Cardiac septum (tissue), 1 donor: ENCODE measurements at regions of chr15 and their contacts with region 1.

Region 1: GRCh38 chr15:31483053-31483985 is 156.7 kb downstream of the KLF13 start:
- DNase-seq: no peak

Region 2: DNA sequence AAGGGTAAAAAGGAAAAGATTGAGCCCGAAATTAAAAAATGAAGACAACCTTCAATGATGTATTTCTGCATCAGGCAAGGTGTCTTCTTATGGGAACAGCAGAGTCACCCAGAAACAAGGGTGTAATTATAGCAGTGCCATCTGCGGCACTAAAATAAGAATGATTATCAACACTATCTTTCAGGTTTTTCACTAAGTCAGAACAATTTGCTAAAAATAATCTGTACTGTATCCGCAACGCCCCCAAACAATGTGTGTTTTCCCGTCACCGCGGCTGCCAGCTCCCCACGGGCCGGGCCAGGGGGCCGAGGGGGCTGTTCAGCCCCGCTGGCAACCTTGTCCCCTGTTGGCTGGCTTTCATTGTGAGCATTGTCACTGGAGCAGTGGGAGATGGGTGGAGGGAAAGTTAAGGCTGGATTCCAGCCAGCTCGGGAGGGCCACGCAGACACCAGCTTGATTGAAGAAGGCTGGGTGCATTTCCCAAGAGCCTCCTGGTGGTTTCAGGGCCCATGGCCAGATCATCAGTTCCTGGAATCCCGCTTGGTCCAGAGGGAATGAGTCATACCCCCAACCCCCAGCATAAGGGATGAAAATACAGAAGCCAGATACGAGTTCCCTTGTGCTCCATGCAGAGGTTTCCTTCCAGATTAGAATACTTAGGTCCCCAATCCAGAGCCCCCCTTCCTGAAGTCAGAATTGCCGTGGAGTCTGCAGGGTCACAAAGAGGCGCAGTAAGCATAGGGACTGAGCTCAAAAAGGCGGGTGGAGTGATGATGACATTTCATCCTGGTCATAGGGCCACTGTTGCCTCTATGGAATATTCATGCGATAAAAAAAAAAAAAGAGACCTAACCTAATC is 246.9 kb before region 1 on chr15:
- intact Hi-C with region 1: no loop called
- DNase-seq: peak; percentile 88

Region 3: DNA sequence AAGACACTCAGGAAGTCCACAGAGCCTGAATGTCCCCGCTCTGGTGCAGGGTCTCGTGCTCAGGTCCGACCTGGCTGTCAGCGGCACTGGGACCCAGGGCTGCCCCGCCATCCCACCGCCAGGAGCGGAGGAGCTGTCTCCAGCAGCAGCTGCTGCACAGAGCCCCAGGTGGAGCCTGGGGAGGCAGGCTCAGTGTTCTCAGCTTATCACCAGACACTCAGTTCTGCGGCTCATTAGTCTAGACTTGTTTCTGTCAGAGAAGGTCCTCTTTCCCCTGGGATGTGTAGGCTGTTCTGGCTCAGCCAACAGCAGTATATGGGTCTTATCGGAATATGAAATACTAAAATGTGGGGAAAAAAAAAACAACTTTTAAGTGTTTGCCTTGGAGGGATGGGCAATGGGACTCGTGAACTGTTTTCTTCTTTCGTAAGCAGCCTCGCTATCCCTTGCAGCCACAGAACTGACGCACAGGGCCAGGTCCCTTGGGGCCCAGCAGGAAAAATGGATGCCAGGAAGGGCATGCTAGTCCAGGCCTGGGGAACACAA is 80.7 kb before region 1 on chr15:
- intact Hi-C with region 1: loop called (anchors 5 kb)
- DNase-seq: no peak

Region 4: DNA sequence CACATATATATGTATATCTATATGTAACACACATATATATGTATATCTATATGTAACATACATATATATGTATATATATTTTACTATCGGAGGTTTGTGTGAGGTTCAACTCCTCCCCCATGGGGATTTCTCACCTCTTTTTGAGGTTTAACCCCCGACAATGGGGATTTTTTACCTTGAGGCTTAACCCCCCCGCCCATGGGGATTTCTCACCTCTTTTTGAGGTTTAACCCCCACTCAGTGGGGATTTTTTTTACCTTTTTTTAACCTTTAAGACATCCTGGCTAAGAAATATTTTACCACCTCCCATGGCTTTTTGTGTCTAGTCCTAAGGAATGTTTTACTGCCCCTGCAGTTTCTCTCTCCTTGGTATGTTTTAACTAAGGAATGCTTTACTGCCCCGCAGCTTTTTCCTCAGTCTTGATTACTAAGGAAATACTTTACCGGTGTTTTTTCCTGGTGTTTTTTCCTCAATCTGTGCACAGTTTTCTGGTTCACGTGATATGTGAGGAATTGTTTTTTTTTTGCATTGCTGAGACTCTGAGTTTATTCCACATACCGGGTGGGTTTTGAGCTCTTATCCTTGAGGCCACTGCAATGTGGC is 28.5 kb after region 1 on chr15:
- intact Hi-C with region 1: no loop called
- DNase-seq: no peak

Region 5: DNA sequence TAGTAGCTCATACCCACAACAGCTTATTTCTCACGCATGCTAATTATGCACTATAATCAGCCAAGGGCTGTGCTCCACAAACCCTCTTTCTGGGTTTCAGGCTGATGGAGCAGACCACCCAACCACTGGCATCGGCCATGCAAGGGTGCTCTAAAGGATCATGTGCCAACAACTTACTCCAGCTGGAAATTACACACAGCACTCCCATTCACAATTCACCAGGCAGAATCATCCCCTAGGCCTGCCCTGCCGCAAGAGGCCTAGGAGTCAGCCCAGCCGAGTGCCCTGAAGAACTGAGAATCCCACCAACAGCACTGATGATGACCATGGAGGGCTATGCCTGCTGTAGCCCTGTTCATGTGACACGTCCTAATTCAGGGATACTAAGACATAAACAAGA is 330.8 kb after region 1 on chr15:
- intact Hi-C with region 1: no loop called
- DNase-seq: no peak